Panc1 (cell line): ENCODE measurements at regions of chr9 and their contacts with region 1.

Region 1: DNA sequence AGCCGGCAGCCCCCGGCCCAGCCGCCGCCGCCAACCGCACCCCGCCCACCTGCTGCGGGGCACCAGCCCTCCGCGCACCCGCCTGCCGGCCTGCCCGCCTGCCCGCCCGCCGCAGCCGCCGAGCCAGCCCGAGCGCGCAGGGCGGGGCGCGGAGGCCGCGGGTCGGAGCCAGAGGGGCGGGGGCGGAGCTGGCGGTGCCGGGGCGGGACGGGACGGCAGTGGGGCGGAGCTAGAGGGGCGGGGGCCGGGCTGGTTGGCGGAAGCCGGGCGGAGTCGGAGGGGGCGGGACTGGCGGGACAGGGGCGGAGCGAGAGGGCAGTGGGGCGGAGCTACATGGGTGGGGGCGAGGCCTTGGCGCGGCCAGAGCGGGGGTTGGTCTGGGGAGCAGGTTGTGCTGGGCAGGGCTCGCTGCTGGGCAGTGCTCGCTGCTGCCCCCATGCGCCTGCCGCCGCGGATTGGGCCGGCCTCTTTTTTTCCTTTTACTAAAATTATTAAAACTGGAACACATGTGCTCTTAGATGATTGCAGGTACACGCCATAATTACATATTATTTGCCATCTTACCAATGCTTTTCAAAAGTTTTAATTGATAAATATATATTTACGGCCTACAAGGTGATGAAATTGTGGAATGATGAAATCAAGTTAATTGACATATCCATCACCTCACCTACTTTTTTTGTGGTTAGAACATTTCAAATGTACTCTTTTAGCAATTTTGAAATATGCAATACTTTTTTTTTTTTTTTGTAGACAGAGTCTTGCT is at the start of gene SH3GLB2:
- DNase-seq: peak; percentile 62
- ATAC-seq: peak; percentile 90
- H3K4me3 ChIP-seq: peak within 1 kb of the TSS; percentile 68 to 72
- H3K27ac ChIP-seq: peak within 1 kb of the TSS; percentile 66
- H3K4me1 ChIP-seq: peaks cover 6% of the 10 kb centered on the region
- H3K27me3 ChIP-seq: no peaks in the 10 kb centered on the region
- CTCF ChIP-seq: peak; percentile 94
- total RNA-seq, gene SH3GLB2: 68.3 TPM

Region 2: DNA sequence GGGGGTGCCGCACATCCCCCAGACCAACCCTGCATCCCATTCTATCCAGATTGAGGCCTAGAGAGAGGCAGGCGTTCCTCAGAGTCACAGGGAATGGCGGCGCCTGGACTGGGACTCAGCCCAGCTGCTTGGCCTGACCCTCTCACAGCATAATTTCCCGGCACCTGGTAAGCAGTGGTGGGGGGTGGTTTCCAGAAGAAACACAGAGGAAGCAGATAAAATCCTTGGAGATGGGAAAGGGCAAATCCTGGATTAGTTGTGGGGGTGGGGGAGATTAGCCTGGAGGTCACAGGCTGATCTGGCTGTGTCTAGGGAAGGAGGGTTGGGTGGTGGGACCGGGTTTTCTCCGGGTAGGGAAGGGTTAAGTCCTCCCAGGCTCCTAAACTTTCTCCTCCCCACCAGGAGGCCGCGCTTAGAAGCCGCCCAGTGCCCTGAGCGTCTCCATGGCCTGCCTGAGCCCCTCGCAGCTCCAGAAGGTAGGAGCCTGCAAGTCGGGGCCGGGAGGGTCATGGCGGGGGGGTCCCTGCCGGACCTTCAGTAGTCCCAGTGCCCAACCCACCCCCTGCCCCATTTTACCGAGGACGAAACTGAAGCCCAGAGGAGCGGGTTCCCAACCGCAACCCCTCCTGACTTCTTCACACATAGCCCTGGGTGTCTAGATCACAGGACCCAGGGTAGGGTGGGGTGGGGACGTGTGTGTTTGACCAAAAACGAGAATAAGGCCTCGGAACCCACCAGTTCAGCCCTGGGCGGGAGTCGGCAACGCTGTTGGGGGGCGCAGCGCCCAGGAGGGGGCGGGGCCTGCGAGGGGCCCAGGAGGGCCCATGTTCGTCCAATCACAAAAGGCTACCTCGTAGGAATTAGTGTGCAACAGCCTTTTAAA is 106.3 kb before region 1 on chr9:
- CTCF ChIA-PET with region 1: no interaction called
- POLR2A ChIA-PET with region 1: no interaction called
- in situ Hi-C with region 1: no loop called
- intact Hi-C with region 1: no loop called
- DNase-seq: no peak
- ATAC-seq: peak; percentile 49; the same call in 1 of the 2 replicates
- H3K4me3 ChIP-seq: no peak overlapping the region
- H3K27ac ChIP-seq: no peak overlapping the region
- H3K4me1 ChIP-seq: peaks cover 4% of the 10 kb centered on the region; the same call in 1 of the 2 replicates
- H3K27me3 ChIP-seq: no peaks in the 10 kb centered on the region
- CTCF ChIP-seq: no peak

Region 3: GRCh38 chr9:129007035-129007762 is 21.2 kb before region 1 on chr9:
- CTCF ChIA-PET with region 1: interaction called, 10 read pairs
- POLR2A ChIA-PET with region 1: interaction called, 3 read pairs
- in situ Hi-C with region 1: no loop called
- intact Hi-C with region 1: no loop called
- DNase-seq: no peak
- ATAC-seq: no peak
- H3K4me3 ChIP-seq: no peak overlapping the region
- H3K27ac ChIP-seq: no peak overlapping the region
- H3K4me1 ChIP-seq: peaks cover 8% of the 10 kb centered on the region; the same call in 1 of the 2 replicates
- H3K27me3 ChIP-seq: no peaks in the 10 kb centered on the region
- CTCF ChIP-seq: peak; percentile 63; the same call in 1 of the 2 replicates

Region 4: DNA sequence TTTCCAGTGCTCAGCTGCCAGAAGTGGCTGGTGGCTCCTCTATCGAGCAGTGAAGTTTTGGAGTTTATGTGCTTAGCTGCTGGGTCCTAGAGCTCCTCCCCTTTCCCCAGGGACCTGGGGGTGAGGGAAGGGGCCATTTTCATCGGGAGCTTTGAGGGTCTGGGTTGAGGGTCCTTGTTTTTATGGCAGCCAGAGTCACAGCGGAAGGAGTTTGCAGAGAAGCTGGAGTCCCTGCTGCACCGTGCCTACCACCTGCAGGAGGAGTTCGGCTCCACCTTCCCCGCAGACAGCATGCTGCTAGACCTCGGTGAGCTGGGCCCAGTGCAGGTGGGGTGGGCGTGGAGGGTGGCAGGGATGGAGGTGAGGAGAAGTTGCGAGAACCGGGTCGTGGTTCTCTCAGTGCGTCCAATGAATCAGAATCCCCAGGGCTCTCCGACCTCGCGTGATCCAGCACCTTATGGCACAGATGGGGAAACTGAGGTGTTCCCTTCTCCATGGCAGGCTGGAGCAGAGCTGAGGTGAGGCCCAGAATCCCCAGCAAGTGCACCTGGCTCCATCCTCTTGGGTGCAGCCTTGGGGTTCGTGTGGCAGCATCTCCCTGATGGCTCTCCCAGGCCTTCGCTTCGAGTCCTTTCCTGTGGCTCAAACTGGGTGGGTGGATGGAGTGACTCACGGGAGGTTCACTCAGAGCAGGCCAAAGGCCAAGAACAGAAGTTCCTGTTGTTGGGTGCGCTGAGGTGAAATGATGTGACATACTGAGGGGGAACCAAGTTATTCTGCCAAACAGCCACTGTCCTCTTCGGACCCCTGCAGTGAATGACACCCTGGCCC is 30.8 kb after region 1 on chr9:
- CTCF ChIA-PET with region 1: no interaction called
- POLR2A ChIA-PET with region 1: no interaction called
- in situ Hi-C with region 1: no loop called
- intact Hi-C with region 1: no loop called
- DNase-seq: no peak
- ATAC-seq: no peak
- H3K4me3 ChIP-seq: no peak overlapping the region
- H3K27ac ChIP-seq: no peak overlapping the region
- H3K4me1 ChIP-seq: no peaks in the 10 kb centered on the region
- H3K27me3 ChIP-seq: no peaks in the 10 kb centered on the region
- CTCF ChIP-seq: no peak

Region 5: DNA sequence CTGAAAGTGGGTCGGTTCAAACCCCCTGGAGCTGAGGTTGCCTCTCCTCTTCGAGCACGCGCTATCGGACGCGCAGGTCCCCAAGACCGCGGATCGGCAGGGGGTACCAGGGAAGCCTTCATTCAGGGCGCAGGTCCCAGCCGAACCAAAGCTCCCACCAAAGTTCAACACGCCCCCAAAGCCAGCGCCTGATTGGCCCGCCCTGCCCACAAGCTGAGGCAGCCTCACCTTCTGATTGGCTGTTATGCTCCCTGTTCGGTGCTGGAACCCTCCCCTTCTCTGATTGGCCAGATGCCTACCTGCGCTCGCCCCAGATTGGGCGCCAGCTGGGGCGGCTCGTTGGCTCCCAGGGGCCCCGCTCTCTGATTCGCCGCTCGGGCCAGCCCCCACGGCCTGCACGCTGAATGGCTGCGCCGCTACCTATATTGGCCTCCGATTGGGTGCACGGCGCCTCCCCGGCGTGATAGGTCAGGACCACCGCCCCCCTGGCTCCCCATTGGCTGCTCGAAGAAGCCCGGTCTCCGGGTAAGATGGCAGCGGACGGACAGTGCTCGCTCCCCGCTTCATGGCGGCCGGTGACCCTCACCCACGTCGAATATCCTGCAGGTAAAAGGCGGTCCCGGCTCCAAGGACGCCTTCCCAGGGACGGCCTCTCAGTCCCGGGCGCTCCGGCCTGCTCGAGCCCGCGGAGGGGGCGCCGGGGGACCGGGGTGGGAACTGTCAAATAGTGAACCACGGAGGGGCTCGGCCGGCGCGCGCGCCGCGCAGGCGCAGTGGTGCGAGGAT is 52.4 kb after region 1 on chr9 and contains the start of gene DOLPP1:
- CTCF ChIA-PET with region 1: interaction called, 12 read pairs
- POLR2A ChIA-PET with region 1: no interaction called
- in situ Hi-C with region 1: no loop called
- intact Hi-C with region 1: no loop called
- DNase-seq: peak; percentile 90
- ATAC-seq: peak; percentile 98
- H3K4me3 ChIP-seq: peak within 1 kb of the TSS; percentile 75 to 86
- H3K27ac ChIP-seq: peak within 1 kb of the TSS; percentile 84
- H3K4me1 ChIP-seq: peaks cover 8% of the 10 kb centered on the region; the same call in 1 of the 2 replicates
- H3K27me3 ChIP-seq: no peaks in the 10 kb centered on the region
- CTCF ChIP-seq: no peak
- total RNA-seq, gene DOLPP1: 13.7 TPM

Region 6: DNA sequence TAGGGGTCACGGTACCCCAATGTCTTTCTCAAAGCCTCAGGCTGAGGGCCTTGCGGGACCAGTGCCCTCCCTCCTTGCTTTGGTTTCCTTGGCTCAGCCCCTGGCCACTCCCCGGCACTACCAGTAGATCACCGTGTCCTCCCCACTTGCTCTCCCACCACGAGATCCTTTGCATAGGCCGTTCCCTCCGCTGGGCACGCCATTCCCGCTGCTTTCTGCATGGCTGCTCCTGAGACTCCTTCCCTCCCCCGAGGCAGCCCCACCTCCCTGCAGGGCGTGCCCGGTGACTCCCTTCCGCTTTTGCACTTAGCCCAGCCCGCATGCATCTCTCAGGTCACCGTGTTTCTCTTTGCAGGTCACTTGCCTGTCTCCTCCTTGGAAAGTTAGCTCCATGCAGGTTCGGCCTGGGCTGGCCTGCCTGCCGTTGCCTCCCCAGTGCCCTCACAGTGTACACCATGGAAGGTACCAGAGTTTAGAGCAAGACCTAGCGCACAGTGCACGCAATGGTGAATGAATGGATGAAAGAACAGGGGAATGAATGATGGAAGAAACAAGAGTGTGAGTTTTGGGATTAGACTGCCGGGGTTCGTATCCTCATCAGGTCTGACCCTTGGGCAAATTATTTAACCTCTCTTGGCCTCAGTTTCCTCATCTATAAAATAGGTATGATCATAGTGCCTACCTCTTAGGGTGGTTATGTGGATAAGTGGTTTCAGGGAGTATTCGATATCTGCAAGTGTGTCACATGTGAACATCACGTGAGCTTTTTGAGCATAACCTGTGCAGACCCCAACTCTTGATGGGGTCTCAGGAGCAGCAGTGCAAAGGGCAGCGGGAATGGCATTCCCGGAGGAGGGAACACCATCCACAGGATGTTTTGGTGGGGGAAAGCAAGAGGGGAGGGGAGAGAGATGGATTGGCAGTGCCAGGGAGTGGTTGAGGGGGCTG is 378.2 kb after region 1 on chr9:
- CTCF ChIA-PET with region 1: no interaction called
- POLR2A ChIA-PET with region 1: no interaction called
- in situ Hi-C with region 1: no loop called
- intact Hi-C with region 1: no loop called
- DNase-seq: no peak
- ATAC-seq: peak; percentile 54; the same call in 1 of the 2 replicates
- H3K4me3 ChIP-seq: no peak overlapping the region
- H3K27ac ChIP-seq: peak overlapping the region; percentile 69
- H3K4me1 ChIP-seq: peaks cover 46% of the 10 kb centered on the region
- H3K27me3 ChIP-seq: no peaks in the 10 kb centered on the region
- CTCF ChIP-seq: no peak